Stomach (tissue), 19 donors: ENCODE measurements at regions of chr4 and their contacts with region 1.

Region 1: DNA sequence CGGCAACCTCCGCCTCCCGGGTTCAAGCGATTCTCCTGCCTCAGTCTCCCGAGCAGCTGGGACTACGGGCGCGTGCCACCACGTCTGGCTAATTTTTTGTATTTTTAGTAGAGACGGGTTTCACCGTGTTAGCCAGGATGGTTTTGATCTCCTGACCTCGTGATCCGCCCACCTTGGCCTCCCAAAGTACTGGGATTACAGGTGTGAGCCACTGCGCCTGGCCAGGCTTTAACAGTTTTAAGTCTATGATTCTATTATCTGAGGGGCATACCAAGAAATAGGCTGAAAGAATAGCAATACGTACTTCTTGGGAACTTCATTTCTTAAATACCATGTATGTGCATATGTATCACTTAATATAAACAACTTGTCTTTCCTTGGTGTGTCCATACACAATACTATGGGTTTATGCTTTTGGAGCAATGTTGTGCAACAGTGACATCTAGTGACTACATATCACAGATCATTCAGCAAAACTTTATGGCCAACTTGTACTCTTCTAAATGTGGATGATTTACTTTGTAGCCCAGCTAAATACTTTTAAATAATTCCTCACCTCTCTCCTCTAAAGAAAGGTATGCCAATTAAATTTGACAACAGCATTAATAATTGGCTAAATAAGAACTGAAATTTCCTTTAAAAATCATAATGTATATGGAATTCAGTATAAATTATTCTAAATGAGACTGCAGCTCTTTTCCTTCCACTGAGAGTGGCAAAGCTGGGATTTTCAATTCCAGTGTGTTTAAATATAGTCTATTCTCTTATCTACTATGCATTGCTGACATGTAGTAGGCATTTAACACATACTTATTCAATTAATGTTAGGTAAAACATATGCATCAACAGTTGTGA is 10.4 kb downstream of the SLC9B1 start:
- DNase-seq: peak in 1 of 2 donors; percentile 89
- H3K4me3 ChIP-seq: no peak overlapping the region
- H3K27ac ChIP-seq: no peak overlapping the region
- H3K4me1 ChIP-seq: peaks cover 8 to 24% (median 19%) of the 10 kb centered on the region in 4 donors
- H3K27me3 ChIP-seq: no peaks in the 10 kb centered on the region
- CTCF ChIP-seq: peak in 5 of 7 experiments; percentile 39 to 63 (median 55)
- EP300 ChIP-seq: no peak
- POLR2A ChIP-seq: no peak

Region 2: GRCh38 chr4:102500696-102501446 is 508.2 kb before region 1 on chr4 and contains the start of gene NFKB1:
- intact Hi-C with region 1: no loop called
- DNase-seq: peak; percentile 73 to 91
- H3K4me3 ChIP-seq: peak within 1 kb of the TSS; percentile 73 to 94 (median 78)
- H3K27ac ChIP-seq: peak within 1 kb of the TSS; percentile 95 to 100 (median 99)
- H3K4me1 ChIP-seq: peaks cover 10 to 57% (median 31%) of the 10 kb centered on the region in 4 donors
- H3K27me3 ChIP-seq: no peaks in the 10 kb centered on the region
- CTCF ChIP-seq: peak in 1 of 7 experiments; percentile 6
- EP300 ChIP-seq: no peak
- POLR2A ChIP-seq: no peak
- total RNA-seq, gene NFKB1: 9.6 to 36.5 (median 23.0) TPM

Region 3: DNA sequence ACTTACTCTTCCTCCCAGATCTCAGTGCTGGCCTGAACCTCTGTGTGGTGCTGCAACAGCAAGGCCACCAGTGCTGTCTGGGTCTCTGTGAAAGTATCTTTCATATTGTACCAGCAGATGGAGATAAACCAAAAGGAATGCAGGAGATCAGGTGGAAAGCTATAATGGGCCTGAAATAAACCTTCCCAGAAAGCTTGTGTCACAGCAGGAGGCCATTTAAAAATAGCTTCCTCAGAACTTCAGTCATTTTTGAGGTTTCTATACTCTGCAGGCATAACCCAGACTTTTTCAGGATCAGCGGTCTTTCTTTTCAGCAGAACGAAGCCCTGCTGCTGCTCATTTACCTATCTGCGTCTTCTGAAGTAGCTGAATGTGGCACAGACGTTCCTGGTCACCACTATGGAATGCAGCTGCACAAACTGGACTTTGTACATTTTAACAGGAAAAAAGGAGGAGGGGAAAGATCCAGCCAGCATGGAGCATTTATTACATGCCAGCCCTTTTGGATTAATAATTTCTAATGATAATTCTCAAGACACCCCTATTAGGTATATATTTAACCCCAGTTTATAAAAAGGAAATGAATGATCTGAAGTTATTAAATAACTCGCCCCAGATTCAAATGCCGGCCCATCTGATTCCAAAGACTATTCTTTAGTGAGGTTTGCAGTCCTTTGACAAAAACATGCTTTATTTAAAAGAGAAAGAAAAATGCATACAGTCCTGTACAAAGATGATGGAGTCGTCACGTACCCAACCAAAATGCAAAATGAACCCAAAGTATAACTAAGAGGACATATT is 388.2 kb before region 1 on chr4:
- intact Hi-C with region 1: loop called (anchors 10 kb)
- DNase-seq: peak; percentile 58 to 88
- H3K4me3 ChIP-seq: peak overlapping the region; percentile 14 to 21 (median 18)
- H3K27ac ChIP-seq: peak overlapping the region; percentile 71 to 84 (median 79)
- H3K4me1 ChIP-seq: peaks cover 8 to 26% (median 13%) of the 10 kb centered on the region in 4 donors
- H3K27me3 ChIP-seq: no peaks in the 10 kb centered on the region
- CTCF ChIP-seq: peak in 4 of 7 experiments; percentile 11 to 70 (median 42)
- EP300 ChIP-seq: no peak
- POLR2A ChIP-seq: no peak

Region 4: DNA sequence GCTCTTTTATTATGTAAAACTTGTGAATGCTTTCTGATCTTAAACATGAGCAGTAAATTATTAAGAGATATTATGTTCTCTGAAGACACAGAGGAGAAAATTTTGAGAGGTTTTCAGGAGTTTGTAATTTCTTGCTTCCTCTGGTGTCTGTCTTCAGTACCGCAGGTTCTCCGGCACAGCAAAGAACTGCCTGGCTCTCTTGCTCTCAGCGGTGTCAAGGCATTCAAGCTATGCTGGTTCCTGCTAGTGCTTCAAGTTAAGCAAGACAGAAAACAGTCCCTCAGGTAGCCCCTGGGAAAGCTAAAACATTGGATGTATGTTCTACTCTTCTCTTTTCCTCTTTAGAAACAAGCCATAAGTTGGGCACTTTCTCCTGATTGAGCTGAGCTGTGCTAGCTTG is 309.2 kb after region 1 on chr4:
- intact Hi-C with region 1: no loop called
- DNase-seq: no peak
- H3K4me3 ChIP-seq: no peak overlapping the region
- H3K27ac ChIP-seq: no peak overlapping the region
- H3K4me1 ChIP-seq: no peaks in the 10 kb centered on the region
- H3K27me3 ChIP-seq: no peaks in the 10 kb centered on the region
- CTCF ChIP-seq: no peak
- EP300 ChIP-seq: no peak
- POLR2A ChIP-seq: no peak

Region 5: DNA sequence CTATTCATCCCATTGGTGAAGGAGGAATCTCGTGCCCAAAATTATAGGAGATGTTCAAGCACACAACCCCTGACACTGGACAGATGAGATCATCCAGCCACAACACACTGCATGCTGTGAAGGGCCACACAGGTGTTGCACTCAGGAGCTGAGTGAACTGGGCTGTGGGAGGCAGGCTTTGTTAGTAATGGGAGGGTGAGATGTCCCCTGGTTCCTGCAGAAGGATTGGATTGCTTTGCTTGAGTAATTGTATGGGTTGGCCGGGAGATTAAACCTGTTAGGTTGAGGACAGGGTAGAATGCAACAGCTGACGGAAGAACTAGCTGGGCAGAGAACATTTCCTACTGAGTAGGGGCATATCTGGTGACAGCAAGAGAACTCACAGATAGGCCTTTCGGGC is 558.5 kb after region 1 on chr4:
- intact Hi-C with region 1: no loop called
- DNase-seq: no peak
- H3K4me3 ChIP-seq: no peak overlapping the region
- H3K27ac ChIP-seq: no peak overlapping the region
- H3K4me1 ChIP-seq: peaks cover 0 to 5% (median 0%) of the 10 kb centered on the region in 4 donors
- H3K27me3 ChIP-seq: no peaks in the 10 kb centered on the region
- CTCF ChIP-seq: no peak
- EP300 ChIP-seq: no peak
- POLR2A ChIP-seq: no peak